Activated T-helper 1 cell treated with anti-CD3 and anti-CD28 coated beads, Interleukin-12 subunit alpha, Interleukin-12 subunit beta, Interleukin-2, Interleukin-4 antibody, amounts not matched to agents 30 ng/mL and 10 ng/mL and 1 ng/mL, durations not matched to agents 14 hours and 24 hours and 36 hours (primary cell): ENCODE measurements at regions of chr3 and their contacts with region 1.

Region 1: DNA sequence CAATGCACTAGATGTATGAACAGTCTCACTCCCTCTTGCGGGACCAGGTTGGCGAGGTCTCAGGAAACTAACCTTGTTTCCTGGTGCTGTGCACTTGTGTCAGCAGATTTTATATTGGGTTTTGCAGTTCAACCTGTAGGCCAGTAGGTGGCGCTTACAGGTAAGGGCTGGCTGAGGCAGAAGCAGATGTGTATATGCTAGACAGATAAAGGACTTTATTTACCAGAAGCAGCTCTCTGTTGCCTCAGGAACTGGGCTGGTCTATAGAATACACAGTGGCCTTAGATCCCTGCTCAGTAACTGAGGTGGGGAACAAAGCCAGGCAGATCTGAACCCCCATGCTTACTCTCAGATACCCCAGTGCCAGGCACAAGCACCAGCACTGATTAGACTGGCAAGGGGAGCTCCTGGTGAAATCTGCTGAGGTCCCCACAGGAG is 296.8 kb downstream of the DOCK3 start:
- DNase-seq: peak; percentile 60
- H3K4me3 Mint-ChIP-seq: no peak overlapping the region
- H3K27ac Mint-ChIP-seq: no peak overlapping the region
- H3K4me1 Mint-ChIP-seq: peaks cover 20% of the 10 kb centered on the region
- H3K27me3 Mint-ChIP-seq: no peaks in the 10 kb centered on the region

Region 2: GRCh38 chr3:51099794-51100535 is 128.5 kb after region 1 on chr3:
- intact Hi-C with region 1: loop called (anchors 1 kb)
- DNase-seq: no peak
- H3K4me3 Mint-ChIP-seq: no peak overlapping the region
- H3K27ac Mint-ChIP-seq: no peak overlapping the region
- H3K4me1 Mint-ChIP-seq: no peaks in the 10 kb centered on the region
- H3K27me3 Mint-ChIP-seq: no peaks in the 10 kb centered on the region

Region 3: DNA sequence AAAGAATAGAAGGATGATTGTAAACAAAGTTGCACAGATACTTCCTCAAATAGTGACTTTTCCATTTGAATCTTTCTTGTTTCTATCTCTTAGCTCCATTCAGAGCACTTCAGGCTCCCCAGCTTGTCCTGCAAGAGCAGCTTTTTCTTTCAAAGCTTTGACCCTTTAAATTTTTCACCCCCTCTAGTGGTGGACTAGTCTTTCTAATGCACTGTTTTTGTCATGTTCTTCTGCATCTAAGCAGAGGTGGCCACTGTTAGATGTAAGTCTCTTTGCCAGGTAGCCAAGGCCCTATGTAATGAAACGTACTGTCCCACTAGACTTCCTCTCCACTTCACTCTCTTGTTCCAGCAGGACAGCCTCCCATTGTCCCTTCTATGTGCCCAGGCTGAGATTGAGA is 339.5 kb after region 1 on chr3:
- intact Hi-C with region 1: loop called (anchors 1 kb)
- DNase-seq: no peak
- H3K4me3 Mint-ChIP-seq: no peak overlapping the region
- H3K27ac Mint-ChIP-seq: no peak overlapping the region
- H3K4me1 Mint-ChIP-seq: no peaks in the 10 kb centered on the region
- H3K27me3 Mint-ChIP-seq: no peaks in the 10 kb centered on the region